MCF 10A (cell line): ENCODE measurements at regions of chr9 and their contacts with region 1.

Region 1: DNA sequence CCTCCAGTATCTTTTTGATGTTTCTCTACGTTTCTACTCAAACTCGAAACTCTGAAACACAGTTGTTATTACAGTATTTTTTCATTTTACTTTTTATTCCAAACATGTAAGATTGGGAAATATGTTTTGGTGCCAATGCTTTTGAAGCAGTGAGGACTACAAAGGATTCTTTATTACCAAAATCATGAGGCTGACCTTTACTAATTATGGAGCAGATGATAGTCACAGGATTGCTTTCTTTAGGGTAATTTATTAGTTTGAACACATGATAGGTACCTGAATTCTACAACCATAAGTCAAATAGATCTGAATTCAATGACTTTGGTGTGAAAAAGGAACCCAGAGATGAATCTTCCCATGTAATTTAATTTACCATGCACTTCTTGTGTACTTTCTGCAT is 2015.1 kb upstream of the C9orf72 start:
- DNase-seq: no peak
- H3K4me3 Mint-ChIP-seq: no peak overlapping the region
- H3K27ac Mint-ChIP-seq: no peak overlapping the region
- H3K4me1 Mint-ChIP-seq: no peaks in the 10 kb centered on the region
- H3K27me3 Mint-ChIP-seq: no peaks in the 10 kb centered on the region
- CTCF ChIP-seq: no peak

Region 2: GRCh38 chr9:29668732-29669131 is 80.4 kb after region 1 on chr9:
- CTCF ChIA-PET with region 1: no interaction called
- POLR2A ChIA-PET with region 1: no interaction called
- intact Hi-C with region 1: loop called (anchors 10 kb)
- DNase-seq: peak; percentile 58
- H3K4me3 Mint-ChIP-seq: no peak overlapping the region
- H3K27ac Mint-ChIP-seq: peak overlapping the region; percentile 85
- H3K4me1 Mint-ChIP-seq: peaks cover 23% of the 10 kb centered on the region
- H3K27me3 Mint-ChIP-seq: no peaks in the 10 kb centered on the region
- CTCF ChIP-seq: no peak